ENCODE measurements at regions of chr2 and their contacts with region 1.

Region 1: GRCh38 chr2:24360050-24360962 is at the start of gene ITSN2:
- DNase-seq: peak; percentile 95
- ATAC-seq: peak; percentile 93
- total RNA-seq, gene ITSN2: 41.3 TPM

Region 2: GRCh38 chr2:24287171-24287570 is 73.1 kb before region 1 on chr2:
- intact Hi-C with region 1: no loop called
- DNase-seq: no peak
- ATAC-seq: no peak

Region 3: DNA sequence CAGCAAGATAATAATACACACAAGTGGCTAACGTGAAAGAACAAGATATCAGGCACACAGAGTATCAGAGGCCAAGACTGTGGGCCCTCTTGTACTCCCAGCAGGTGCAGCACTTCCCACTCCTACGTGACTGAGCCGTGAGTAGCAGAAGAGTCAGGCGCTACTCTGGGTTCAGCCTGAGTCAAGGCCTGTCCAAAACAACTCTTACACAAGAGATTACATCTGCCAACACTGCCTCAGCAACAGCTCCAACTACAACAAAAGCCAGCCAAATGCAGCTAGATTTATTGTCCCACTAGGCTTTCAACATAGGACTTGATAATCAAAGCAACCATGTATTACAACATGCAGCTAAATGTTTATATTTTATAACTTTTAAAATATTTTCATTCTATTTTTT is 56.2 kb before region 1 on chr2:
- intact Hi-C with region 1: loop called (anchors 2 kb)
- DNase-seq: peak; percentile 75
- ATAC-seq: peak; percentile 99

Region 4: DNA sequence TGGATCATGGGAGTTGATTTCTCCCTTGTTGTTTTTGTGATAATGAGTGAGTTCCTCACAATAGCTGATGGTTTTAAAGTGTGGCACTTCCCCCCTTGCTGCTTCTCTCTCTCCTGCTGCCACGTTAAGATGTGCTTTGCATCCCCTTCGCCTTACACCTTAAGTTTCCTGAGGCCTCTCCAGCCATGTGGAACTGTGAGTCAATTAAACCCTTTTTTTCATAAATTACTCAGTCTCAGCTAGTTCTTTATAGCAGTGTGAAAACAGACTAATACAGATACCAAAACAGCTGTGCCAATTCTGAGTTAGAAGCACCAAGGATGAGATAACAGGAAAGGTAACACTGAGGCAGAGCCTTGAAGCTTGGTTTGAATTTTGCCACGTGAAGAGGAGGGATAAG is 44.6 kb before region 1 on chr2:
- intact Hi-C with region 1: loop called (anchors 5 kb)
- DNase-seq: no peak
- ATAC-seq: no peak

Measured in Right ventricle myocardium inferior (tissue), 1 donor.